Activated CD4-positive, alpha-beta memory T cell treated with anti-CD3 and anti-CD28 coated beads for 36 hours (primary cell): ENCODE measurements at regions of chr10 and their contacts with region 1.

Region 1: DNA sequence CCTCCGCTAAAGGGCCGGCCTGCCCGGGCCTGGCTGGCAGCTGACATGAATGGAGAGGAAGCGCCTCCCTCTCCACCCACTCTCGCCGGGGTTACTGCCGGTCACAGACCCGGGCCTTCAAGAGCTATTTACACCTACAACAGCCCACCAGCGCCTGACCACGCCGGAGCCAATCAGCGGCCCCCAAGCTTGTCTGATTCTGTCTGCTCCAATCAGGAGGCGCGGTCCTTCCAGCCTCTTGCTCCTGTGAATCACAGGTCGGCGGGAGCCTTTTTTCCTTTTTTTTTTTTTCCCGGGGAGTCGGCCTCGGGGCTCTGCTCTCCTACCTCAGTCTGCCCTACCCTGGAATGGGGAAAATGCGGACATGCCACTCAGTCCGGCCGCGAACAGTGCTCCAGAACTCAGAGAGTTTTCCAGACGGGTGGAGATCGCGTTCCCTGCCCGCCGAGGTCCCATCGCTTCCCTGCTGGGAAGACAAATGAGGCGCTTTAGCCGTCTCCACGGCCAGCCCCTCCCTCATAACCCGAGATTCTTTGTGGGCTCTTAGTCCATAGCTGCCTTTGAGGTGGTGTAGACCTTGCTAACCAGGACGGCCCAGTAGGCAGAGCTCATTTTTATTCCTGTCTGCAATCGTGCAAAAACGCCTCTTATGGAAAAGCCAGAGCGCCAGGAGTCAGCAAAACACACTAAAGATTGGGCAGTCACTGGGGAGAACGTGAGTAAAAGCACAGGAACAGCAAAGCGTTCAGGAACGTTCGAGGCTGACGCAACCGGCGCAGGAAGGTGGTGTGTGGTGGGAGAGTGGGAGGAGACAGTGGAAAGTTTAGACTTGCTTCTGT is 26.5 kb downstream of the SCD start:
- DNase-seq: peak; percentile 99
- H3K4me3 Mint-ChIP-seq: no peak overlapping the region
- H3K27ac Mint-ChIP-seq: no peak overlapping the region
- H3K4me1 Mint-ChIP-seq: peaks cover 35% of the 10 kb centered on the region
- H3K27me3 Mint-ChIP-seq: no peaks in the 10 kb centered on the region

Region 2: GRCh38 chr10:99430451-99431189 is 942.9 kb before region 1 on chr10 and contains the start of gene GOT1:
- CTCF ChIA-PET with region 1: no interaction called
- POLR2A ChIA-PET with region 1: no interaction called
- intact Hi-C with region 1: loop called (anchors 5 kb)
- DNase-seq: peak; percentile 98
- H3K4me3 Mint-ChIP-seq: peak within 1 kb of the TSS; percentile 99
- H3K27ac Mint-ChIP-seq: peak within 1 kb of the TSS; percentile 90
- H3K4me1 Mint-ChIP-seq: peaks cover 32% of the 10 kb centered on the region
- H3K27me3 Mint-ChIP-seq: no peaks in the 10 kb centered on the region
- total RNA-seq, gene GOT1: 51.6 to 54.9 TPM

Region 3: DNA sequence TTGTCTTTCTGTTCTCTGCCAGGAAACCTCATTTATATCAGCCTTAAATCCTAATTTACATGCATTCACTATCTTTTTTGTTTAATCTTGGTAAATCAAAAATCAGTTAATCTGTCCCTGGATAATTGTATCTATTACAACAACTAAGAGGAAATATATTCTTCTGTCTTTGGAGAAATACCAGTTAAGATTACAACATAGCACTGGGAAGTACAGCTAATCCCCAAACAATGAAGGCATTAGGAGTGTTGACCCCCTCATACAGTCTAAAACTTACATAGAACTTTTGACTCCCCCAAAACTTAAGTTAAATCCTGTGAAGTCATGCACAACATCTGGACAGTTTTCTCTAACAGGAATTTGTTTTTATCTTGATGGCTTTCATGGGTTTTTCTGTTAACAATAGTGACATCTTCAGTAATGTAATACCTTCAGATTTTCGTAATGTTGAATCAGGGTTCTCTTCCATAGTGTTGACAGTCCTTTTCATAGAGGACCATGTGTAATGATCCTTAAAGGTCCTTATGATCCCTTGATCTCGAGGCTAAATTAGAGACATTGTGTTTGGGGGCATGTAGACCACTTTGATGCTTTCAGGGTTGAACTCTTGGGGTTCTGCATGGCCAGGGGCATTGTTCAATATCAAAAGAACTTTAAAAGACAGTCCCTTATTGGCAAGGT is 615.2 kb before region 1 on chr10:
- CTCF ChIA-PET with region 1: no interaction called
- POLR2A ChIA-PET with region 1: no interaction called
- intact Hi-C with region 1: no loop called
- DNase-seq: no peak
- H3K4me3 Mint-ChIP-seq: no peak overlapping the region
- H3K27ac Mint-ChIP-seq: no peak overlapping the region
- H3K4me1 Mint-ChIP-seq: no peaks in the 10 kb centered on the region
- H3K27me3 Mint-ChIP-seq: no peaks in the 10 kb centered on the region

Region 4: DNA sequence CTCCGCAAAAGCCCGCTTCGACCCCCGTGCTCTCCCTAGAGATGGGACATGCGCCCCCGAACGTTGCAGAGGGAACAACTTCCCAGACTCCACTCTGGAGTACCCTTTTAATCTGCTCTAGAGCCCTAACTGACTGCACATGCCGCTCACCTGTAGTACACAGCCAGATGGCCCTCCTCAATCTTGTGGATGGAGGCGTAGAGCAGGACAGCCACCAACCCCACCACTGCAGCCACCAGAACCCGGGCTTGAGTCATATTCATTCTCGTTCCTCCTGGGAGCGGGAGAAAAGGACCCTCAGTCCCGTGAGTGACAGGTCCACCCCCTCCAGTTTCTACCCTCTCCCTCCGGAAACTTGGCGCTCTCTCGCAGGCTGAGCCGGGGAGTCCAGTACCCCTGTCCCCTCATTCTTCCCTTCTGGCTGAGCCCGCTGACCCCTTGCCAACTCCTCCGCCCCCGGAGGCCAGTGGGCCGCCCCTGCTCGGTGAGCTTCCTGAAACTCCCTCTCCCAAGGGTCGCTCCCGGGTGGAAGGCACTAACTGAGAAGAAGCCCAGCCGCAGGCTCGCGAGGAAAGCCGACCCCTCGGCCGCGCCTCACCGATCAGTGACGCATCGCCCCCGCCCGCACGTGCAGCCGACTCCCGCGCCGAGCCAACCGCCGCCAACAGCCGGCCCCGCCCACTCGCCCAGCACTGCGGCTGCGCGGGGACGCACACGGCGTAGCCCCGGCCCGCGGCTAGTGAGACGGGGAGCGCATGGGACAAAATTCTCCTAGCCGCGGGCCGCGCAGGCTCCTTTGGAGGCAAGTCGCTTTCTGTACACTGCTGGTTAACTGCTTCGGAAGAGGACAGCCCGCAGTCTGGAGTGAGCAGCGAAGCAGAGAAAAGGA is 187.9 kb before region 1 on chr10 and contains the start of gene ERLIN1:
- CTCF ChIA-PET with region 1: no interaction called
- POLR2A ChIA-PET with region 1: no interaction called
- intact Hi-C with region 1: loop called (anchors 5 kb)
- DNase-seq: peak; percentile 96
- H3K4me3 Mint-ChIP-seq: peak within 1 kb of the TSS; percentile 90
- H3K27ac Mint-ChIP-seq: peak within 1 kb of the TSS; percentile 92
- H3K4me1 Mint-ChIP-seq: peaks cover 55% of the 10 kb centered on the region
- H3K27me3 Mint-ChIP-seq: no peaks in the 10 kb centered on the region
- total RNA-seq, gene ERLIN1: 15.4 to 16.8 TPM

Region 5: DNA sequence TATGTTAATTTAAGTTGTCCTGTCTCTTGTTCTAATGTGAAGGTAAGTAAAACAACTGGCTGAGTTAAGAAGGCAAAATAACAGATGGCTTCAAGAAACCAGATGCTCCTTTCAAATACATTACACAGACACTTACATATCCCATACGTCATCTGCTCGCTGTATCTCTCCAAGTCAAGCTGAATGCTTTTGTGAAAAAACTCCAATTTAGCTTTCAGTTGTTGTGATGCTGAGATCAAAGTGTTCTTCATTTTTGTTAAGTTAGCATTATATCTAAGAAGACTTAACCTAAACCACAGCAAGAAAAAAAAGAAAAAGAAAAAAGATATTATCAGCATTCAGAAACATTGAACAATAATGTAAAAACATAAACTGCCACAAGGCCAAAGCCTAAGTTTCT is 169.1 kb before region 1 on chr10:
- CTCF ChIA-PET with region 1: no interaction called
- POLR2A ChIA-PET with region 1: no interaction called
- intact Hi-C with region 1: no loop called
- DNase-seq: no peak
- H3K4me3 Mint-ChIP-seq: no peak overlapping the region
- H3K27ac Mint-ChIP-seq: no peak overlapping the region
- H3K4me1 Mint-ChIP-seq: peaks cover 2% of the 10 kb centered on the region
- H3K27me3 Mint-ChIP-seq: no peaks in the 10 kb centered on the region

Region 6: GRCh38 chr10:100346765-100347567 is 26.6 kb before region 1 on chr10 and contains the start of gene SCD:
- CTCF ChIA-PET with region 1: interaction called, 24 read pairs
- POLR2A ChIA-PET with region 1: interaction called, 74 read pairs
- intact Hi-C with region 1: loop called (anchors 1 kb)
- DNase-seq: peak; percentile 93
- H3K4me3 Mint-ChIP-seq: peak within 1 kb of the TSS; percentile 87
- H3K27ac Mint-ChIP-seq: peak within 1 kb of the TSS; percentile 81
- H3K4me1 Mint-ChIP-seq: peaks cover 39% of the 10 kb centered on the region
- H3K27me3 Mint-ChIP-seq: peaks cover 2% of the 10 kb centered on the region
- total RNA-seq, gene SCD: 156 to 158 TPM

Region 7: DNA sequence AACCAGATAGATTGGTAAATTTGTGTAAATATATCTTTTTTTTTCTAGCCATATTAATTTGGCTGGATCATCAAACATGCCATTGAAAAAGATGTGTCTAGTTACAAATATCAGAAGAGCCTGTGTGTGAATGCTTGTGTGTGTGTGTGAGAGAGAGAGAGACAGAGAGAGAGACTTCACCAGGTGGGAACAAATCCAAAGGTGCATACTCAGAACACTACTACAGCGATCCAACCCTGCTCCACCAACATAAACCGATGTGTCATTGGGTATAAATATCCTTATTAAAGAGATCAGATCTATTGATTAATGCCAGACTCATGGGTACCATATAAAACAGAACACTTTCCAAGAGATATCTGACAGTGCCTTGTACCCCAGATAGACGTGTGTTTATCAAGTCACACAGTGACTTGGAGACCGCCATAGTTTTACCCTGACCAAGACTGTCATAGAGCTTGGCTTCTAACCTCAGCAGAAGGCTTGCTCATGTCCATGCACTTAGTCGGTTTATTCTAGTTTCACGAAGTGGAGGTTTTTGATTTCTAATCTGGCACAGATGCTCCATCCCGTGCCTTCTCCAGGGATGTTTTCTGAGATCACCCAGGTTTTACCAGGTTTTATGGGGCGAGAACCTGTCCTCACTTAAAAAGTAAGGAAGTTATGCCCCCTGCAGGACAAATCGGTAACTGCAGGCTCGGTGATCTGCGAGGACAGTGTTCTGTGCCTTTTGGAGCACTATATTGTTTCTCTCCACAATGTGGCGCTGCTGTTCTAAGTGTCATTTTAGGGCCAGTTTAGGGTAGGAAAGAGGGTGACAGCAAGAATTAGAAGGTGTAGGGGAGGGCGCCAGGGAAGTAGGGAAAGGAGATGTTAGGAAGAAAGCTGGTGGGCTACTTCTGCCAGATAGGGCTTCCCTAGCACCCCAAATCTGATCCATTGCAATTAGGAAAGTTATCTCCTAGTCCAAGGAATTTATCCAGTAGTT is 60.0 kb after region 1 on chr10:
- CTCF ChIA-PET with region 1: interaction called, 7 read pairs
- POLR2A ChIA-PET with region 1: no interaction called
- intact Hi-C with region 1: loop called (anchors 2 kb)
- DNase-seq: peak; percentile 97
- H3K4me3 Mint-ChIP-seq: no peak overlapping the region
- H3K27ac Mint-ChIP-seq: peak overlapping the region; percentile 2
- H3K4me1 Mint-ChIP-seq: peaks cover 2% of the 10 kb centered on the region
- H3K27me3 Mint-ChIP-seq: no peaks in the 10 kb centered on the region

Region 8: DNA sequence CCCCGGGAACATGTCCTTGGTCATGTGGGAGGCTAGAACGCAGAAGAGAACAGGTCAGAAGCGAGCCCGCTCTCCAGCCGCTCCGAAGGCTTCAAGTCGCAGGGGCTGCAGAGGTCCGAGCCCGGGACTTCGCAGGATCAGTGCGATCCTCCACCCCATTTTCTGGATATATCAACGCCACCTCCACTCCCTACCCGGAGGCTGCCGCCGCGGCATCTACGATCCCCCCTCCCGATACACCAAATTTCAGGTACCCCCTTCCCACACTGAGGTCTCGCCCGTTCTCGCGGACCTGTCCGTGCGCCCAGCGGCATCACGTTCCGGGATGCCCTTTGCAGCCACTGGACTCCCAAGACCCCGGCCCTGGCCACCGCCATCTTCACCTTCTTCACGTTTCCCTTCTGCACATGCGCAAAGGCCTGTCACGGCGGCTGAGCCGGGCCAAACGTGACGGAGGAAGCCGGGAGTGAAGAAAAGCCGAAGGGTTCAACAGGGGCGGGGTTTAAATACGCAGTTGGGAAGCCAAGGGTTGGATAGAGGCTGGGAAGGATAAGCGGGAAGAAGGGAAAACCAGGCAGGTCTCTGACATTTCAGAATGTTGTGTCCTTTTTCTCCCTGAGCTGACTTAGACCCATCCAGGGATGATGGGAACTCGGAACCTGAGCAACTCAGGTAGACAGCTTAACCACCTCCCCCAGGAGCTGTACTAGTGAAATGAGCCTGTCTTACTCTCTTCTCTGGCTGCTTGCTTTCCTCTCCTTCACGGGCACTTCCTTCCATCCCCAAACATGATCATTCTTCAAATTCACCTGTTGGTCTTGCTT is 156.2 kb after region 1 on chr10 and contains the start of gene NDUFB8:
- CTCF ChIA-PET with region 1: no interaction called
- POLR2A ChIA-PET with region 1: interaction called, 4 read pairs
- intact Hi-C with region 1: loop called (anchors 1 kb)
- DNase-seq: peak; percentile 92
- H3K4me3 Mint-ChIP-seq: peak within 1 kb of the TSS; percentile 100
- H3K27ac Mint-ChIP-seq: peak within 1 kb of the TSS; percentile 96
- H3K4me1 Mint-ChIP-seq: peaks cover 33% of the 10 kb centered on the region
- H3K27me3 Mint-ChIP-seq: no peaks in the 10 kb centered on the region
- total RNA-seq, gene NDUFB8: 390 to 404 TPM

Region 9: GRCh38 chr10:100912605-100913469 is 539.3 kb after region 1 on chr10 and contains the start of gene SLF2:
- CTCF ChIA-PET with region 1: no interaction called
- POLR2A ChIA-PET with region 1: no interaction called
- intact Hi-C with region 1: loop called (anchors 5 kb)
- DNase-seq: peak; percentile 97
- H3K4me3 Mint-ChIP-seq: peak within 1 kb of the TSS; percentile 99
- H3K27ac Mint-ChIP-seq: peak within 1 kb of the TSS; percentile 99
- H3K4me1 Mint-ChIP-seq: peaks cover 47% of the 10 kb centered on the region
- H3K27me3 Mint-ChIP-seq: no peaks in the 10 kb centered on the region
- total RNA-seq, gene SLF2: 33.9 to 35.9 TPM